Heart right ventricle (tissue), 16 donors: ENCODE measurements at regions of chr20 and their contacts with region 1.

Region 1: DNA sequence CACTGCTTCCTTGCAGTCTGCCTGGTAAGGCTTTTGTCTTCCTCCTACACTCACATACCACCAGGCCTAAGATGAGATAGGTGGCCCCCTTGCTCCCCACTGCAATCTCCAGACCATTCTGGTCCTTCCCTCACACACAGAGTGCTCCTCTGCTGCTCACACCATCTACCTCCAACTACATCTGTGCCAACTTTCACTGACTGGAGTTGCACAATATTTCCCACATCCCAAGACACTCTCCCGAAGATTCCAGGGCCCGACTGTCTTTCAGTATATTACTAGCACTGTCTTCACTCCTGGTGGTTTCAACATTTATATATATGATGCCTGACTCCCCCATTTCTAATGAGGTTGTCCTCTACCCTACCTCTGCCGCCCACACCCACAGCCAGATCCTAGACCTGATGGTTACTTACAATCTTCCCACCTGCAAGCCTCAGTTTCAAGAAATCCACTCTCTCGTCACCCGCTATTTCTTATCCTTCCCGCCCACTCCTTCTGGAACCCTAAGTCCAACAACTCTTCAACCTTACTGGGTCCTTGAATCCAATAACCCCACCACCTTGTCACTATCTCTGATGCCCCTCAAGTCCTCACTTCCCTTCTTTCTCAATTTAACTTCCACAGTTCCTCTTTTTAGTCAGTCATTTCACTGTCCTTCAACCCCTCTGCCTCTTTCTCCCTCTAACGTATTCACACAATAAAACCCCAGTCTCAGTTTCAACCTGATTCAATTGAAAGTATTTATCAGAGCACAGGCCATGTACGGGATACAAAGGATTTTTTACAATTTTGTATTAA is 21.6 kb downstream of the RALGAPA2 start:
- DNase-seq: no peak
- ATAC-seq: peak in 1 of 8 donors; percentile 60
- H3K4me3 ChIP-seq: no peak overlapping the region
- H3K27ac ChIP-seq: no peak overlapping the region
- H3K4me1 ChIP-seq: peaks cover 0 to 33% (median 15%) of the 10 kb centered on the region in 9 donors
- H3K27me3 ChIP-seq: no peaks in the 10 kb centered on the region
- CTCF ChIP-seq: no peak

Region 2: DNA sequence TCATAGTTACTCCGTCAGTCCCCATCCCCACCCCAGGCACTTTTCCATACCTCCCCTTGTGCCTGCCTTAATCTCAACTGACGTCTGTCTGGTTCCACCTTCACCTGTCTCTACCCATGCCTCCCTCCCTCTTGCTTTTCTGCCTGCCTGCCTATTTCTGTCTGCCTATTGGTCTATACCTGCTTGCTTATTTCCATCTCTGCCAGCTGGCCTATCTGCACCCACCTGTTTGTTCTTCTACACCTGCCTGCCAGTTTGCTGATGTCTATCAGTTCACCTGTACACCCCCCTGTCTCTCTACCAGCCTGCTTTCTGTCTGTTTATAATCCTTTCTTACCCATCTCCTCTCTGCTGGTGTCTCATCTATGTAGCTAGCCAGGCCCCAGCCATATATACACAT is 66.0 kb before region 1 on chr20:
- intact Hi-C with region 1: no loop called
- DNase-seq: no peak
- ATAC-seq: no peak
- H3K4me3 ChIP-seq: no peak overlapping the region
- H3K27ac ChIP-seq: no peak overlapping the region
- H3K4me1 ChIP-seq: peaks cover 0 to 6% (median 0%) of the 10 kb centered on the region in 9 donors
- H3K27me3 ChIP-seq: no peaks in the 10 kb centered on the region
- CTCF ChIP-seq: no peak

Region 3: GRCh38 chr20:20802328-20802727 is 111.5 kb after region 1 on chr20:
- intact Hi-C with region 1: loop called in 1 of 10 experiments (anchors 10 kb)
- DNase-seq: no peak
- ATAC-seq: peak in 4 of 8 donors; percentile 33 to 73 (median 44)
- H3K4me3 ChIP-seq: no peak overlapping the region
- H3K27ac ChIP-seq: no peak overlapping the region
- H3K4me1 ChIP-seq: peaks cover 0 to 11% (median 0%) of the 10 kb centered on the region in 9 donors
- H3K27me3 ChIP-seq: no peaks in the 10 kb centered on the region
- CTCF ChIP-seq: no peak